ENCODE measurements at regions of chr2 and their contacts with region 1.

Region 1: DNA sequence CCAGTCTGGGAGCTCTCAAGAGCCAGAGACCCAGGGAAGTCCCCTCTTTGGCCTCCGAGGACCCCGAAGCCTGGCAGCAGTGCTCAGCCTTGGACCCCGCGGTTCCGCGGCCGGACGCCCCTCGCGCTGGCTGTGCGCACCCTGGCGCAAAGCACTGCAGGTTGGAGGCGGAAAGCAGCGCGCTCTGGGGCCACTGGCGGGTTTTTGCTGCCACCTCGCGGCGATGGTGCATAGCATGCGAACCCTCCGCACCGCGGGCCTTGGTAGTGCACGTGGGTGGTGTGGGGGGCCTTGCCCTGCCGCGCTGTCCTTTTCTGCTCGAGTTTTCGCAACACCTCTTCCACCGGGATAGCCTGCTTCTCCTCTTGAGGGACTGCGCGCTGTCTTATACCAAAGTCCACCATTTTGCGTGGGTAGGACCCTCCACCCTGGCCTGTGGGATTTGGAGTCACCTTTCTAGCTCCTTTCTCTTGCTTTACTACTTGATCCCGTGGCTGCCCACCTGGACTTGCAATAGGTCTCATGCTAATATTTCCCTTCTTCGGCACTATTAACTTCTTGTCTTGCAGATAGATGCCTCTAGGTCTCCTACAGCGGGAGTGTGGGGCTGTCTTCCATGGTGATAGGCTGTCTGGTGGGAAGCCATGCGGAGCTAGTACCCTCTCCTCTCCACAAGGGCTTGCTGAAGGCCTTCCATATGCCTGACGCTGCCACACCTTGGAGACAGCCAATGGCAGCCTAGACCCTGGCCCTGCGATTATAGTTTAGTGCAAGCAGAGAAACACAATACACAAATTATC is 14.3 kb downstream of the SIX3 start:
- DNase-seq: peak; percentile 77 to 89
- ATAC-seq: peak; percentile 79 to 92 (median 86)
- H3K4me3 ChIP-seq: peak overlapping the region; percentile 59
- H3K27ac ChIP-seq: no peak overlapping the region
- H3K4me1 ChIP-seq: peaks cover 21% of the 10 kb centered on the region
- H3K27me3 ChIP-seq: peaks cover 0 to 48% (median 29%) of the 10 kb centered on the region in 3 donors
- CTCF ChIP-seq: peak; percentile 94

Region 2: DNA sequence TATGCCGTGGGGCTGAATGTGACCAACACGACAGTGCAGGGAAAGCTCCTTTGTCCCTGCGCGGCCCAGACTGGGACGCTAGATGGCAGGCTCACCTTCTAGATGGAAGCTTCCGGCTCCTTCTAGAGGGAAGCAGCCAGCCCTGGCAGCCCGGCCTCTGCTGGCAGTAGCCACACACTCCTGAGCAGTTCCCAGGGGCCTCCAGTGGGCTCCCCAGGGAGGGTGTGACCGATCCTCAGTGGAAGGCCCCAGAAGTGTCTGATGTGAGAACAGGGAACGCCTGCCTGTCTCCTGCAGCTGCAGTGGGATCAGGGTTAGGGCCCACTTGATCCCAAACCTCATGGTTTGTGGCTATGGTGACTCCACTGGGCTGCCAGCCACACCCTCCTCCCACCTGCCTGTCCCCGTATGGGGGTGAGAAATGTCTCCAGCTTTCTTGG is 911.5 kb before region 1 on chr2:
- intact Hi-C with region 1: loop called in 1 of 2 experiments (anchors 10 kb)
- DNase-seq: peak; percentile 84 to 94
- ATAC-seq: peak; percentile 99 to 100 (median 100)
- H3K4me3 ChIP-seq: no peak overlapping the region
- H3K27ac ChIP-seq: peak overlapping the region; percentile 61
- H3K4me1 ChIP-seq: peaks cover 6% of the 10 kb centered on the region
- H3K27me3 ChIP-seq: no peaks in the 10 kb centered on the region
- CTCF ChIP-seq: peak; percentile 90

Region 3: GRCh38 chr2:44244129-44244871 is 711.5 kb before region 1 on chr2:
- intact Hi-C with region 1: loop called in 1 of 2 experiments (anchors 10 kb)
- DNase-seq: peak; percentile 35 to 63
- ATAC-seq: peak; percentile 71 to 89 (median 86)
- H3K4me3 ChIP-seq: peak overlapping the region; percentile 61
- H3K27ac ChIP-seq: peak overlapping the region; percentile 50
- H3K4me1 ChIP-seq: peaks cover 12% of the 10 kb centered on the region
- H3K27me3 ChIP-seq: no peaks in the 10 kb centered on the region
- CTCF ChIP-seq: peak; percentile 68

Region 4: GRCh38 chr2:44392338-44392943 is 563.4 kb before region 1 on chr2:
- intact Hi-C with region 1: loop called (anchors 2 to 5 kb)
- DNase-seq: peak in 1 of 2 donors; percentile 24
- ATAC-seq: no peak
- H3K4me3 ChIP-seq: no peak overlapping the region
- H3K27ac ChIP-seq: no peak overlapping the region
- H3K4me1 ChIP-seq: no peaks in the 10 kb centered on the region
- H3K27me3 ChIP-seq: no peaks in the 10 kb centered on the region
- CTCF ChIP-seq: peak; percentile 64

Region 5: GRCh38 chr2:44479122-44479887 is 476.5 kb before region 1 on chr2:
- intact Hi-C with region 1: loop called (anchors 2 to 5 kb)
- DNase-seq: no peak
- ATAC-seq: peak; percentile 88 to 100 (median 96)
- H3K4me3 ChIP-seq: no peak overlapping the region
- H3K27ac ChIP-seq: no peak overlapping the region
- H3K4me1 ChIP-seq: no peaks in the 10 kb centered on the region
- H3K27me3 ChIP-seq: no peaks in the 10 kb centered on the region
- CTCF ChIP-seq: peak; percentile 98